ENCODE measurements at regions of chr3 and their contacts with region 1.

Region 1: GRCh38 chr3:47152578-47152977 is 11.3 kb downstream of the SETD2 start:
- DNase-seq: no peak
- CTCF ChIP-seq: no peak

Region 2: DNA sequence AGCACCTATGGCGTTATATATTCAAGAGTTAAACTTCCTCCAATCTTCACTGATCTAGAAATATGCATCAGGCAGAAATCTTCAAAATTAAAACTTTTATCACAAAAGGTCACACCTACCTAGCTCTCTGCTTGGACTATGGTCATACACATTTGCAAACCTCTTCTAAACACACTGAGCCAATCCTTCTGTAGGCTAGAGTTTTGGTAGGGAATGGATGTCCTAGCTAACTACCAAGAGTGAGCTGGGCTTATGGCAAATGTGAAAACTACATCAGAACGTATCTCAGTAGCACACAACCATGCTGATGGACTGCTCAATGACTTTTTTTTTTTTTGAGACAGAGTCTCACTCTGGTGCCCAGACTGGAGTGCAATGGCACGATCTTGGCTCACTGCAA is 18.3 kb before region 1 on chr3:
- CTCF ChIA-PET with region 1: interaction called, 10 read pairs
- POLR2A ChIA-PET with region 1: no interaction called
- DNase-seq: no peak
- CTCF ChIP-seq: no peak

Region 3: DNA sequence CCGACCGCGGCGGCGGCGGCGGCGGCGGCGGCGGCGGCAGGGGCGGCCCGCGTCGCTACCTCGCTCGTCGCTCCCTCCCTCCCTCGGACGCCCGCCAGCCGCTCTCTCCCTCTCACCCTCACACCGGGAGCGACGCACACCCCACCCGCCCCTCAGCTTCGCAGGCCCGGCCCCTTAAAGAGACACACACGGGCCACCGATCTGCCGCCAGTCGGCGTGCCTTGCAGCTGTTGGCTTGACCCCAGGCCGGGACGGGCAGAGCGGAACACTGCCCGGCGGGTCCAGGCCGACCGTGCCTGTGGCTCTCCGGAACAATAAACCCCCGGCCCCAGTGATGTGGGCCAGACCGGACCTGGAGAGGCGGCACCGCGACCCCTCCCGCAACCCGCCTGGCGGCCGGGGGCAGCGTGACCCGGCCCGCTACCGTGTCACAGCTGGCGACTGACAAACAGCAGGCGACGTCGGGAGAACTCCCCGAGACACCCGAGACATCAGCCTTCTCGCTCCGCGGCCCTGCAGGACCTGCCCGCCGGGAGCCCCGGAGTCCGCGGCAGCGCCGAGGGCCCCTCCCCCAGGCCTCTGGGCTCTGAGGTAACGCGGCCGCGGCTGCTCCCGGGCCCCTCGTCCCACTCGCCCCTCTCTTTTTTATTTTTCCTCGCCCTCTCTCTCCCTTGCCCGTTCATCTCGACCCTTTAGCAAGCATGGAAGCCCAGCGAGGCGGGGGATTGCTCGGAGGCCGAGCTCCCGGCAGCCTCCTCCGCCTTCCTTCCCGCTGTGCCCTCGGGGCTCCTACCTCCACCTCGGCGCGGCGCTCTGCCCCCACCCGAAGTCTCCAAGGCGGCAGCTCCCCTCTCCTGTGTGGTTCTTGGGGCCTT is 11.7 kb after region 1 on chr3 and contains the start of gene SETD2:
- CTCF ChIA-PET with region 1: interaction called, 10 read pairs
- POLR2A ChIA-PET with region 1: no interaction called
- DNase-seq: peak; percentile 93
- CTCF ChIP-seq: peak; percentile 85

Region 4: GRCh38 chr3:47176582-47176981 is 24.0 kb after region 1 on chr3:
- CTCF ChIA-PET with region 1: no interaction called
- POLR2A ChIA-PET with region 1: no interaction called
- DNase-seq: no peak
- CTCF ChIP-seq: no peak